Activated CD4-positive, alpha-beta T cell treated with anti-CD3 and anti-CD28 coated beads for 36 hours (primary cell): ENCODE measurements at regions of chr6 and their contacts with region 1.

Region 1: GRCh38 chr6:33154349-33154748 is 37.9 kb downstream of the COL11A2 start:
- DNase-seq: no peak
- ATAC-seq: no peak
- H3K4me3 Mint-ChIP-seq: no peak overlapping the region
- H3K27ac Mint-ChIP-seq: no peak overlapping the region
- H3K4me1 Mint-ChIP-seq: no peaks in the 10 kb centered on the region
- H3K27me3 Mint-ChIP-seq: peaks cover 11% of the 10 kb centered on the region

Region 2: DNA sequence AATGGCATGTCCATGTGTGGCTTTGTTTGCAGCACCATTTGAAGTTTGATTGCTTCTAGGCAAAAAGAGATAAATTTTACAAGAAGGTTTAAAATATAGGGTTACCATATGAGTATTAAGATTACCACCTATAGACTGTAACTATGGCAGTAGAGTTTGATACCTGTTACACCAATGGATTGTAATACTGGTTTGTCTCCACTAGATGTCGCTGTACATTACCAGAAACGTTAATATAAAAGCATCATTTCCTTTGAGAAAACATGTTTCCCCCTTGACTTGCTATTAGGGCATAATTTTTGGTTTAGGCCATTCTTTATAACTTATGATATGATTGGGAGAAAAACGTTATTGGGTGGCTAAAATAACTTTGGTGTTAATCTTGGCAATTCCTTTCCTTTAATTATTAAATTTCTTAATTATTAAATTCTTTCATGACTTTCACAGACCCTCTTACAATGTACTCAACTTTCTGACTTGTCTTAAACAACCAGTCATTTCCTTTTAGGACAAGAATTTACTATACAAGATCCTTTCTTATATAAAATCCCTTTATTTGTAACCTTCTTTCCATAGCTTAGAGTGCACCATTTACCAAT is 35.7 kb before region 1 on chr6:
- CTCF ChIA-PET with region 1: interaction called, 16 read pairs
- POLR2A ChIA-PET with region 1: no interaction called
- intact Hi-C with region 1: no loop called
- DNase-seq: no peak
- ATAC-seq: peak; percentile 55
- H3K4me3 Mint-ChIP-seq: no peak overlapping the region
- H3K27ac Mint-ChIP-seq: no peak overlapping the region
- H3K4me1 Mint-ChIP-seq: peaks cover 7% of the 10 kb centered on the region
- H3K27me3 Mint-ChIP-seq: peaks cover 31% of the 10 kb centered on the region

Region 3: GRCh38 chr6:33211666-33212346 is 57.5 kb after region 1 on chr6:
- CTCF ChIA-PET with region 1: no interaction called
- POLR2A ChIA-PET with region 1: no interaction called
- intact Hi-C with region 1: no loop called
- DNase-seq: no peak
- ATAC-seq: no peak
- H3K4me3 Mint-ChIP-seq: no peak overlapping the region
- H3K27ac Mint-ChIP-seq: no peak overlapping the region
- H3K4me1 Mint-ChIP-seq: peaks cover 35% of the 10 kb centered on the region
- H3K27me3 Mint-ChIP-seq: peaks cover 23% of the 10 kb centered on the region